ENCODE measurements at regions of chr1 and their contacts with region 1.

Region 1: DNA sequence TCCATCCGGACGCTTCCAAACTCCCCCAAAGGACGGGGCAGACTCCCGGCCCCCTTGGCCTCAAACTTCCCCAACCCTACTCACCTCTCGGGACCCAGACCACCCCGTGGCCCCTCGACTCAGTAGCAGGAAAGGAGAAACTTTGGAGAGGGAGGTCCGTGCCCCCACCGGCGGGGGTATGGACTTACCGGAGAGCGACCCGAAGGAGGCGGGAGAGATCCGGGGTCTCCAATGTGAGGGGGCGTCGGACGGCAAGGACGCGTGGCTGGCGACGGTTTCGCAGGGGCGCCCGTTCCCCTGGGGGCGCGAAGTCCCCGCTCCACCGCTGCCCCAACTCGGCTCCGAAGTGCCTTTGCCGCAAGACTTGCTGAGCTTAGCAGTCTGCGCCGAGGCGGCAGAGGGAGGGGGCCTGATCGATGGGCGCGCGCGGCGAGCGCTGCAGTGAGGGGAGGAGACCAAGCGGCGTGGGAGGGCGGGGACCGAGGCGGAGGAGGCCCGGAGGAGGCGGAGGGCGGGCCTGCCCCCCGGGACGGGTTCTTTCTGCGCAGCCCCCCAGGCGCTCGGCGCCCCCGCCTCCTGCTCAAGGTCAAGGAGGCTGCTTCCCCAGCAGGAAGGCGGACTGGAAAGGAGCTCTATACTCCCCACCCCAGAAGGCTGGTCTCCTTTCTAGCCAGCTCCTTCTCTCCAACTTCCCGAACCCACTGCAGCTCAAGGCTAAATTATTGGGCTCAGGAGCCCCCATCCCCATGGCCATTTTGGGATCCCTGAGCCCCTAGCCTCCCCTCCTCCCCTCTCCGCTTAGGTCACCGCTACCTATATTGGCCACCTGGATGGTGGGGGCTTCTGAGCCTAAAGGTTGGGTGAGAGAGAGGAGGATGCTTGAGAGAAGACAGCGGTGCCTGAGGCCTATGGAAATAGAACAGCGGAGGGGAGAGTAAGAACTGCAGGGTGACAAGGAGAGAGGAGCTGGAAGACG is at the start of gene SYT2:
- DNase-seq: no peak
- ATAC-seq: peak; percentile 83
- H3K4me3 ChIP-seq: peak within 1 kb of the TSS; percentile 26; the same call in 1 of the 2 replicates
- H3K27ac ChIP-seq: no peak within 1 kb of the TSS
- H3K4me1 ChIP-seq: peaks cover 4% of the 10 kb centered on the region; the same call in 1 of the 2 replicates
- H3K27me3 ChIP-seq: peaks cover 79% of the 10 kb centered on the region
- CTCF ChIP-seq: no peak
- POLR2A ChIP-seq: no peak
- RAD21 ChIP-seq: no peak
- total RNA-seq, gene SYT2: under 0.01 TPM in 2 replicates

Region 2: GRCh38 chr1:202184750-202185460 is 525.5 kb before region 1 on chr1:
- CTCF ChIA-PET with region 1: no interaction called
- POLR2A ChIA-PET with region 1: no interaction called
- dilution Hi-C with region 1: no loop called
- in situ Hi-C with region 1: loop called (anchors 5 kb)
- intact Hi-C with region 1: no loop called
- DNase-seq: peak; percentile 83
- ATAC-seq: peak; percentile 88
- H3K4me3 ChIP-seq: no peak overlapping the region
- H3K27ac ChIP-seq: no peak overlapping the region
- H3K4me1 ChIP-seq: no peaks in the 10 kb centered on the region
- H3K27me3 ChIP-seq: peaks cover 64% of the 10 kb centered on the region
- CTCF ChIP-seq: peak; percentile 90
- POLR2A ChIP-seq: no peak
- RAD21 ChIP-seq: peak; percentile 72

Region 3: DNA sequence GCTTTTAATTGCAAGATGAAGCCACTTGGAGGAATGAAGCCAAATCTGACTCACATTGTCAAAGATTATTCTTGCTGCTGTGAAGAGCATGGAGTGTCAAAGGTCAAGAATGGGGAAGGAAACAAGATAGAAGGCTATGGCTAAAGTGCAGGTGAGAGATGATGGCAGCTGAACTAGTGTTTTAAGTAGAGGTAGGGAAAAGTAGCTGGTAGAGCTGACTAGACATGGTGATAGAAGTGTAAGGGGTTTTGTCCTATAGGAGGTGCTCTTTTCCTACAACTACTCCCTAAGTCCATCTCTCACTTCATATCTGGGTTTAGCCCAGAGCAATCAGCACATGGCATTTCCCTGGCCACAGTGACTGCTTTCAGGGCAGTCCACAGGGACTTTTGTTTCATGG is 380.5 kb before region 1 on chr1:
- CTCF ChIA-PET with region 1: no interaction called
- POLR2A ChIA-PET with region 1: interaction called, 3 read pairs
- dilution Hi-C with region 1: no loop called
- in situ Hi-C with region 1: loop called (anchors 10 kb)
- intact Hi-C with region 1: no loop called
- DNase-seq: no peak
- ATAC-seq: no peak
- H3K4me3 ChIP-seq: no peak overlapping the region
- H3K27ac ChIP-seq: no peak overlapping the region
- H3K4me1 ChIP-seq: no peaks in the 10 kb centered on the region
- H3K27me3 ChIP-seq: no peaks in the 10 kb centered on the region
- CTCF ChIP-seq: no peak
- POLR2A ChIP-seq: no peak
- RAD21 ChIP-seq: no peak

Region 4: DNA sequence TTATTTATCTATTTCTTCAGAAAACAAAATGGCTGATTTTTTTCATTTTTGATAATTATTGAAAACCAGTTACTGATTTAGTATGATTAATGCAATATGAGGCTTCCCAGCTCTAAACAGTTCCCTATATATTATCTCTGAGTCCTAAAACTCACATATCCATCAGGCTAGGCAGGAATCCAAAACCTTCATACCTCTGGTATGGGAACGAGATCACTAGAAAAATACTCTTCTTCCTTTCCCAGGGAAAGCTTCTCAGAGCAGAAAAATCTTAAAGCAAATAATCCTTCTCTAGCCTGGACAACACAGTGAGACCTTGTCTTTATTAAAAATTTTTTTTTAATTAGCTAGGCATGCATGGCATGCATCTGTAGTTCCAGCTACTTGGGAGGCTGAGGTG is 55.4 kb after region 1 on chr1:
- CTCF ChIA-PET with region 1: no interaction called
- POLR2A ChIA-PET with region 1: no interaction called
- dilution Hi-C with region 1: no loop called
- in situ Hi-C with region 1: no loop called
- intact Hi-C with region 1: no loop called
- DNase-seq: peak; percentile 63
- ATAC-seq: peak; percentile 63
- H3K4me3 ChIP-seq: no peak overlapping the region
- H3K27ac ChIP-seq: no peak overlapping the region
- H3K4me1 ChIP-seq: peaks cover 1% of the 10 kb centered on the region
- H3K27me3 ChIP-seq: no peaks in the 10 kb centered on the region
- CTCF ChIP-seq: no peak
- POLR2A ChIP-seq: no peak
- RAD21 ChIP-seq: no peak

Measured in IMR-90 (cell line).